Activated T-helper 2 cell treated with anti-CD3 and anti-CD28 coated beads, Interferon-gamma antibody, Interleukin-2, Interleukin-4, amounts not matched to agents 10 μg/mL and 5 μg/mL and 100 μg/mL, durations not matched to agents 14 hours and 24 hours and 36 hours (primary cell): ENCODE measurements at regions of chr21 and their contacts with region 1.

Region 1: GRCh38 chr21:42593007-42593806 is 60.2 kb upstream of the PDE9A start:
- DNase-seq: peak; percentile 48
- H3K4me3 Mint-ChIP-seq: no peak overlapping the region
- H3K27ac Mint-ChIP-seq: no peak overlapping the region
- H3K4me1 Mint-ChIP-seq: peaks cover 8% of the 10 kb centered on the region
- H3K27me3 Mint-ChIP-seq: peaks cover 4% of the 10 kb centered on the region

Region 2: DNA sequence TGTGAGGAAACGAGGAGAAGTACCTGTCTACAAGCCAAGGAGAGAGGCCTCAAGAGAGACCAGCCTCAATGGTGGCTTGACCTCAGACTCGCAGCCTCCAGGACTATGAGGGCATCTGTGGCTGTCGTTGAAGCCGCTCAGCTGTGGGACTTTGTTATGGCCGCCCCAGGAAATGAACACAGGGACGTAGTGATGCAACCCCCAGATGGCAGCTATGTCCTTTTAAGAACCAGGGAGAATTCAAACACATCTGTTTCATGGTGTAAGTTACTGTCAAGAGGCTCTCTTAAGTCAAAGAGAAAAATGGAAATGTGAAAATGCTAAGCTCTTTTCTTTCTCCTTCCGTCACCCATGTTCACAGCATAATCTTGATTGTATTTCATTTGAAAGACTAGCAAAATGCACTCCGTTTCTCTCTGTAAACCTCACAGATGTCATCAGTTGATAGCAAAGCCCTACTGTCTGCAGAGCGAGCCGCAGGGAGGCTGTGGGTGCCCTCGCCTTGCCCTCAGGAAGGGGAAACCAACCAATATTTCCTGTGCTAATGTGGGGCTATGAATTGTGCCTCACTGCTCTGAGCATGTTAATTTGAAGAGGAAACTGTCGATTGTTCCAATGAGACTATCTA is 168.2 kb before region 1 on chr21:
- intact Hi-C with region 1: no loop called
- DNase-seq: peak; percentile 81
- H3K4me3 Mint-ChIP-seq: peak overlapping the region; percentile 68
- H3K27ac Mint-ChIP-seq: peak overlapping the region; percentile 93
- H3K4me1 Mint-ChIP-seq: peaks cover 67% of the 10 kb centered on the region
- H3K27me3 Mint-ChIP-seq: no peaks in the 10 kb centered on the region

Region 3: GRCh38 chr21:42570841-42571387 is 22.3 kb before region 1 on chr21:
- intact Hi-C with region 1: no loop called
- DNase-seq: no peak
- H3K4me3 Mint-ChIP-seq: no peak overlapping the region
- H3K27ac Mint-ChIP-seq: no peak overlapping the region
- H3K4me1 Mint-ChIP-seq: no peaks in the 10 kb centered on the region
- H3K27me3 Mint-ChIP-seq: no peaks in the 10 kb centered on the region

Region 4: GRCh38 chr21:42818328-42818749 is 225.1 kb after region 1 on chr21:
- intact Hi-C with region 1: loop called (anchors 1 kb)
- DNase-seq: peak; percentile 36
- H3K4me3 Mint-ChIP-seq: no peak overlapping the region
- H3K27ac Mint-ChIP-seq: no peak overlapping the region
- H3K4me1 Mint-ChIP-seq: no peaks in the 10 kb centered on the region
- H3K27me3 Mint-ChIP-seq: peaks cover 2% of the 10 kb centered on the region

Region 5: DNA sequence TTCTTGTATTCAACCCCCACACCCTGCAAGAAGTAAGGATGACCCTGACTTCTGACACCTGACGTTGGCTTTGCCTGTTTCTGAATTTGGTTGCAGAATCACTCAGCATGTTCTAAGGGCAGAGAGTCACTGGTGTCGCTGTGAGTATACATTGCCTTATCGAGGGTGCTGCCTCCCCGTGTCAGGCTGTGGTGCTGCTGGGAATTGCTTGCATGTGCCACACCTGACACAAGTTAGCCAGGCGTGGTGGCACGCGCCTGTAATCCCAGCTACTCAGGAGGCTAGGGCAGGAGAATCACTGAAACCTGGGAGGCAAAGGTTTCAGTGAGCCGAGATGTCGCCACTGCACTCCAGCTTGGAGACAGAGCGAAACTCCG is 240.2 kb after region 1 on chr21:
- intact Hi-C with region 1: loop called (anchors 1 kb)
- DNase-seq: peak; percentile 58
- H3K4me3 Mint-ChIP-seq: peak overlapping the region; percentile 49
- H3K27ac Mint-ChIP-seq: no peak overlapping the region
- H3K4me1 Mint-ChIP-seq: peaks cover 20% of the 10 kb centered on the region
- H3K27me3 Mint-ChIP-seq: peaks cover 3% of the 10 kb centered on the region